Caco-2 (cell line): ENCODE measurements at regions of chr11 and their contacts with region 1.

Region 1: GRCh38 chr11:71470946-71471345 is 17.9 kb downstream of the NADSYN1 start:
- DNase-seq: peak; percentile 66 to 69
- H3K4me3 ChIP-seq: no peak overlapping the region
- H3K4me3 Mint-ChIP-seq: peak overlapping the region; percentile 30
- H3K27ac Mint-ChIP-seq: peak overlapping the region; percentile 4
- H3K4me1 ChIP-seq: peaks cover 23% of the 10 kb centered on the region
- H3K4me1 Mint-ChIP-seq: peaks cover 29% of the 10 kb centered on the region
- H3K27me3 ChIP-seq: no peaks in the 10 kb centered on the region
- H3K27me3 Mint-ChIP-seq: no peaks in the 10 kb centered on the region
- CTCF ChIP-seq: no peak

Region 2: DNA sequence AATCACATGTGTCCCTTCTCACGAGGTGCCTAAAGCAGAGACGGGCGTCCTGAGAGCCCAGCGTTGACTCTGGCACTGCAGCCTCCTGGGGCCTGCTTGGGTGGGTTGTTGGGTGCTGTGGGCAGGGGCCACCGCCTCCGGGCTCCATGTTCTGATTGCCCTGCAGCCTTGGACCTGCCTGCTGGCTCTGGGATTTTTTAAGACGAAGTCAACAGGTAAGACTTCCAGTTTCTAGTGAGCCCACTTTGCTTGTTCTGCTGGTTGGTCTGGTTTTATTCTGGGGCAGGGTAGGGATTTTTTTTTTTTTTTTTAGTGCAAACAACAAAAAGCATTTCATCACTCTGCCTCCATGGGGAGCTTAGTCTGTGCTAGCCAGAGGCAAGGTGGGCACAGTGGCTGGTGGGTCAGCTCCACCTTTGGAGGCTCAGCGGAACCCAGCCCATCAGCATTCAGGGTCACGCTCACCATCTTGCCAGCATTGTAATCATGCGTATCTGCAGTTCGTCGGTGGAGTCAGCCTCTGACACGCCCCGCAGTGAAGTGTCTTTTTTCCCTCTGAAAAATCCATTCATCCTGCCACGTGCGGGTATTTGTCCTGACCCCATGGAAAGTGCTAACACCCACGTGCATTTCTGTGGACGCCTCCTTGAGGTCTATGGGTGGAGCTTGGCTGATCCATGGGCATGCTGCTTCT is 10.4 kb after region 1 on chr11:
- CTCF ChIA-PET with region 1: no interaction called
- POLR2A ChIA-PET with region 1: no interaction called
- intact Hi-C with region 1: loop called (anchors 1 kb)
- DNase-seq: peak; percentile 75 to 86
- H3K4me3 ChIP-seq: no peak overlapping the region
- H3K4me3 Mint-ChIP-seq: peak overlapping the region; percentile 49
- H3K27ac Mint-ChIP-seq: peak overlapping the region; percentile 87
- H3K4me1 ChIP-seq: peaks cover 25% of the 10 kb centered on the region
- H3K4me1 Mint-ChIP-seq: peaks cover 30% of the 10 kb centered on the region
- H3K27me3 ChIP-seq: no peaks in the 10 kb centered on the region
- H3K27me3 Mint-ChIP-seq: no peaks in the 10 kb centered on the region
- CTCF ChIP-seq: no peak

Region 3: GRCh38 chr11:71489311-71490048 is 18.5 kb after region 1 on chr11:
- CTCF ChIA-PET with region 1: no interaction called
- POLR2A ChIA-PET with region 1: no interaction called
- intact Hi-C with region 1: loop called (anchors 2 kb)
- DNase-seq: peak in 1 of 2 experiments; percentile 34
- H3K4me3 ChIP-seq: no peak overlapping the region
- H3K4me3 Mint-ChIP-seq: no peak overlapping the region
- H3K27ac Mint-ChIP-seq: peak overlapping the region; percentile 40
- H3K4me1 ChIP-seq: peaks cover 23% of the 10 kb centered on the region
- H3K4me1 Mint-ChIP-seq: peaks cover 21% of the 10 kb centered on the region
- H3K27me3 ChIP-seq: no peaks in the 10 kb centered on the region
- H3K27me3 Mint-ChIP-seq: no peaks in the 10 kb centered on the region
- CTCF ChIP-seq: no peak

Region 4: GRCh38 chr11:71530602-71531001 is 59.7 kb after region 1 on chr11:
- CTCF ChIA-PET with region 1: no interaction called
- POLR2A ChIA-PET with region 1: no interaction called
- intact Hi-C with region 1: no loop called
- DNase-seq: peak in 1 of 2 experiments; percentile 30
- H3K4me3 ChIP-seq: no peak overlapping the region
- H3K4me3 Mint-ChIP-seq: no peak overlapping the region
- H3K27ac Mint-ChIP-seq: no peak overlapping the region
- H3K4me1 ChIP-seq: peaks cover 16% of the 10 kb centered on the region
- H3K4me1 Mint-ChIP-seq: peaks cover 28% of the 10 kb centered on the region
- H3K27me3 ChIP-seq: no peaks in the 10 kb centered on the region
- H3K27me3 Mint-ChIP-seq: no peaks in the 10 kb centered on the region
- CTCF ChIP-seq: no peak